Ascending aorta (tissue), 2 donors: ENCODE measurements at regions of chr20 and their contacts with region 1.

Region 1: GRCh38 chr20:47278563-47279348 is 77.7 kb downstream of the ZMYND8 start:
- DNase-seq: peak in 1 of 2 donors; percentile 64
- H3K4me3 ChIP-seq: no peak overlapping the region
- H3K27ac ChIP-seq: peak overlapping the region; percentile 95 to 97
- H3K4me1 ChIP-seq: peaks cover 10 to 38% of the 10 kb centered on the region in 2 donors
- H3K27me3 ChIP-seq: no peaks in the 10 kb centered on the region
- CTCF ChIP-seq: no peak

Region 2: GRCh38 chr20:46883892-46884291 is 394.9 kb before region 1 on chr20:
- intact Hi-C with region 1: no loop called
- DNase-seq: no peak
- H3K4me3 ChIP-seq: no peak overlapping the region
- H3K27ac ChIP-seq: no peak overlapping the region
- H3K4me1 ChIP-seq: no peaks in the 10 kb centered on the region
- H3K27me3 ChIP-seq: no peaks in the 10 kb centered on the region
- CTCF ChIP-seq: no peak

Region 3: GRCh38 chr20:47008842-47009508 is 269.8 kb before region 1 on chr20:
- intact Hi-C with region 1: no loop called
- DNase-seq: no peak
- H3K4me3 ChIP-seq: no peak overlapping the region
- H3K27ac ChIP-seq: no peak overlapping the region
- H3K4me1 ChIP-seq: no peaks in the 10 kb centered on the region
- H3K27me3 ChIP-seq: no peaks in the 10 kb centered on the region
- CTCF ChIP-seq: no peak

Region 4: GRCh38 chr20:47309909-47310308 is 31.2 kb after region 1 on chr20:
- intact Hi-C with region 1: loop called (anchors 2 kb)
- DNase-seq: no peak
- H3K4me3 ChIP-seq: peak overlapping the region in 1 of 2 donors; percentile 26
- H3K27ac ChIP-seq: peak overlapping the region; percentile 81 to 82
- H3K4me1 ChIP-seq: peaks cover 10 to 26% of the 10 kb centered on the region in 2 donors
- H3K27me3 ChIP-seq: no peaks in the 10 kb centered on the region
- CTCF ChIP-seq: no peak

Region 5: DNA sequence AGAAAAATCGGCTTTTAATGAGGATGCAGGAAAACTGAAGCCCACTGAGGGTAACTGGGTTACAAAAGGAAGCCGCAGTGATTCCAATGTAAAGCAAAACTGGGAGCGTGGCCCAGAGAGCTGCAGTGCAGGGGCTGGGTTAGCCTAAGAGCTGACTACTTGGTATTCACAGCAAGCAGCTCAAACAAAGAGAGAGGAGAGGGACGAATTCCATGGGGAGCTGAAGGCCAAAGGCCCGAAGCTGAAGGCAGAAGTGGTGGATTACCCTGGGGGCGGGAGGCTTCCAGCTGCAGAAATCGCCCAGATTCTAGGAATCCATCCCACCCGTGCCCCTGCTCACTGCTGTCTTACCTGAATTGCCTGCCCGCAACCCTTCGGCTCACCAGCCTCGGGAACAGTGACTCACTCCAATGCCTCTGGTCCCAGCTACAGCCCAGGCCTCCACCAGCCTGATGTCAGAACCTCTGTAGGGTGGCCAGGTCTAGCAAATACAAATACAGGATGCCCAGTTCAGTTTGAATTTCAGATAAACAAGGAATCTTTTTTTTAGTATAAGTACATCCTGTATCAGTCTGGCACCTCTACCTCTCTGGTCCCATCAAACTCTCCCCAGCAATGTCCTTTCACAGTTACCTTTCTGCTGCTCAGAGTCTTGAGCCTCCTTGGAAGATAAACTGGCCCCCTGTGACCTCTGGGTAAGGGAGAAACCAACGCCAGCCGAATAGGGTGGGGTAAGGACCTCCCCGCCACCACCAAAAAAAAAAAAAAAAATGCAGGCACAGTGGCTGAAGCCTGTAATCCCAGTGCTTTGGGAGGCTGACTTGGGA is 92.3 kb after region 1 on chr20:
- intact Hi-C with region 1: no loop called
- DNase-seq: no peak
- H3K4me3 ChIP-seq: no peak overlapping the region
- H3K27ac ChIP-seq: peak overlapping the region in 1 of 2 donors; percentile 33
- H3K4me1 ChIP-seq: peaks cover 0 to 3% of the 10 kb centered on the region in 2 donors
- H3K27me3 ChIP-seq: no peaks in the 10 kb centered on the region
- CTCF ChIP-seq: no peak

Region 6: DNA sequence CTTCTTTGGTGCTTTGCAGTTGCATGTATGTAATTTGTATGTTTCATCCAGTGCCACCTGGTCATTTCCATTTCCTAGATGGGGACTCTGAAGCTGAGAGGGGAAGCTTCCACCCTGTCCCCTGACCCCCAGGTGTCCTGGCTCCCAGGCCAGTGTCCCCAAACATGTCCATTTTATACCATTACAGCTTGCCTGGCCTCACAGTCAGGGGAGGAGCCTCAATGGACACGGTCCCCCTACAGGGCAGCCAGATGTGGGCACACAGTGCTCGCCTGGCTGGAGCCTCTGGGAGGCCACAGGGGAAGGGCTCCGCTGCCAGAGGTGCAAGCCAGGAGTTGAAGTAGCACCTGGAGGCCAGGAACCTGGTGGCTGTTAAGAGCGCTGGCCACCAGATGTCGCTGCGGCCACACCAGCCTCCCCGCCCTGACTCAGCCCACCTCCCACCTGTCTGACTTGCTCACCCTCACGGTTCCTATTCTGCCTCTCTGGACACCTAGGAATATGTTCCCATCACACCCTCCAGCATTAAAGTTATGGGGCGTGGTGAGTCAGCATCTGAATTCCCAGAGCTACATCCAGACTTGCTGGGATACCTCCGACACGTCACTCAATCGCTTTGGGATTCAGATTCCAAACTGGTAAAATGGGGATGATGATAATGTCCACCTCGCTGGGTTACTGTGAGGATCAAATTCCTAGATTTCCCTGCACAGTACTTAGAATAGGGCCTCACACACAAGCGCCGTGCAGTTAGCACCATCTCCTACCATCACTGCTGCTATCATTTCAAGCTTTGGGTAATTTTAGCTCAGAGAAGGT is 399.1 kb after region 1 on chr20:
- intact Hi-C with region 1: no loop called
- DNase-seq: no peak
- H3K4me3 ChIP-seq: no peak overlapping the region
- H3K27ac ChIP-seq: no peak overlapping the region
- H3K4me1 ChIP-seq: no peaks in the 10 kb centered on the region
- H3K27me3 ChIP-seq: no peaks in the 10 kb centered on the region
- CTCF ChIP-seq: peak; percentile 55 to 74 (median 66)